Natural killer cell (primary cell): ENCODE measurements at regions of chr15 and their contacts with region 1.

Region 1: GRCh38 chr15:90818251-90819210 is 49.9 kb upstream of the FURIN start:
- DNase-seq: peak; percentile 27 to 55
- ATAC-seq: peak in 1 of 3 donors; percentile 44
- H3K4me3 ChIP-seq: no peak overlapping the region
- H3K4me3 Mint-ChIP-seq: peak overlapping the region; percentile 80
- H3K27ac ChIP-seq: peak overlapping the region; percentile 79
- H3K27ac Mint-ChIP-seq: peak overlapping the region; percentile 86 to 96
- H3K4me1 ChIP-seq: peaks cover 76% of the 10 kb centered on the region
- H3K4me1 Mint-ChIP-seq: peaks cover 67 to 70% of the 10 kb centered on the region in 2 donors
- H3K27me3 ChIP-seq: no peaks in the 10 kb centered on the region
- H3K27me3 Mint-ChIP-seq: no peaks in the 10 kb centered on the region
- CTCF ChIP-seq: peak; percentile 28

Region 2: GRCh38 chr15:90701880-90702630 is 116.5 kb before region 1 on chr15:
- intact Hi-C with region 1: no loop called
- DNase-seq: no peak
- ATAC-seq: no peak
- H3K4me3 ChIP-seq: no peak overlapping the region
- H3K4me3 Mint-ChIP-seq: no peak overlapping the region
- H3K27ac ChIP-seq: no peak overlapping the region
- H3K27ac Mint-ChIP-seq: no peak overlapping the region
- H3K4me1 ChIP-seq: no peaks in the 10 kb centered on the region
- H3K4me1 Mint-ChIP-seq: no peaks in the 10 kb centered on the region
- H3K27me3 ChIP-seq: no peaks in the 10 kb centered on the region
- H3K27me3 Mint-ChIP-seq: no peaks in the 10 kb centered on the region
- CTCF ChIP-seq: no peak

Region 3: GRCh38 chr15:90851114-90851513 is 32.6 kb after region 1 on chr15:
- intact Hi-C with region 1: loop called (anchors 2 kb)
- DNase-seq: peak in 1 of 2 donors; percentile 68
- ATAC-seq: peak; percentile 24 to 51 (median 42)
- H3K4me3 ChIP-seq: no peak overlapping the region
- H3K4me3 Mint-ChIP-seq: peak overlapping the region; percentile 76
- H3K27ac ChIP-seq: no peak overlapping the region
- H3K27ac Mint-ChIP-seq: peak overlapping the region; percentile 80 to 85
- H3K4me1 ChIP-seq: peaks cover 57% of the 10 kb centered on the region
- H3K4me1 Mint-ChIP-seq: peaks cover 35 to 46% of the 10 kb centered on the region in 2 donors
- H3K27me3 ChIP-seq: no peaks in the 10 kb centered on the region
- H3K27me3 Mint-ChIP-seq: peaks cover 0 to 2% of the 10 kb centered on the region in 2 donors
- CTCF ChIP-seq: no peak